ENCODE measurements at regions of chr14 and their contacts with region 1.

Region 1: DNA sequence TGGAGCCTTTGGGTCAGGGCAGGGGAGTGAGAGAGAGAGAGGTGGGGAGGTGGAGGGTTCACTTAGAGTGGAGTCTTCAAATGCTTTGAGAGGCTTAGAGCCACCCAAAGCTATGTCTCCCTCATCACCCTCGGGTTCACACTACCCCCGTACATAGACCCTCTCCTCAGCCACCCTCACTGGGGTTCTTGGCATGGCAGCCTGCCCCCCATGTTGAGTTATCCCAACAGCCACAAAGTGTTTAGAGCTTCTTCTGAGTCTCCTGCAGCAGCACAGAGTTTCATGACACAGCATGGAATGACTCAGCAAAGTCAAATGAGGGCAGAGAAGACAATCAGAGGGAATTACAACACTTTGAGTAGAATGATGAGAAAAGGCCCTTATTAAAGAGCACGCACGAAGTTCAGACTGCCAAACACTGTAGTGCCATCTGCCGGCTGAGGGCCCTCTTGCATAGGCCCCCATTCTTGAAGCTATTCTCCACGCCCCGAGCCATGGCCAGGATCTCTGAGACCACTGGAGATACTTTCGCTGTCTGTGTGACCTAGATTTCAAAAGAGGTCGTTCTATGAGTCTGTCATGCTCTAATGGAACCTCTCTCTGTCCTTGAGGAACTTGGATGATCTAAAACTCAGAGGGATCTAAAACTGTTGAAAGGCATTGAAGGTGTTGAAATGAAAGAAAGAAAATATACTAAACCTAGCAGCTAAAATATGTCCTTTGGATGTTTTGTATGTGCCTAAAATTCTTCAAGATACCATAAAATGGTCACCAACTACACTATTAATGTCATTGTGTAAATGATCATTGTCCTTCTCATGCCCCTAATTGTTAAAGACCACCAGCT is 221.9 kb downstream of the PELI2 start:
- DNase-seq: no peak
- H3K4me3 ChIP-seq: no peak overlapping the region
- H3K27ac ChIP-seq: peak overlapping the region in 1 of 4 donors; percentile 1
- H3K4me1 ChIP-seq: peaks cover 22 to 31% (median 31%) of the 10 kb centered on the region in 4 donors
- H3K27me3 ChIP-seq: no peaks in the 10 kb centered on the region
- CTCF ChIP-seq: peak; percentile 69 to 86 (median 76)
- EP300 ChIP-seq: no peak
- POLR2A ChIP-seq: no peak

Region 2: DNA sequence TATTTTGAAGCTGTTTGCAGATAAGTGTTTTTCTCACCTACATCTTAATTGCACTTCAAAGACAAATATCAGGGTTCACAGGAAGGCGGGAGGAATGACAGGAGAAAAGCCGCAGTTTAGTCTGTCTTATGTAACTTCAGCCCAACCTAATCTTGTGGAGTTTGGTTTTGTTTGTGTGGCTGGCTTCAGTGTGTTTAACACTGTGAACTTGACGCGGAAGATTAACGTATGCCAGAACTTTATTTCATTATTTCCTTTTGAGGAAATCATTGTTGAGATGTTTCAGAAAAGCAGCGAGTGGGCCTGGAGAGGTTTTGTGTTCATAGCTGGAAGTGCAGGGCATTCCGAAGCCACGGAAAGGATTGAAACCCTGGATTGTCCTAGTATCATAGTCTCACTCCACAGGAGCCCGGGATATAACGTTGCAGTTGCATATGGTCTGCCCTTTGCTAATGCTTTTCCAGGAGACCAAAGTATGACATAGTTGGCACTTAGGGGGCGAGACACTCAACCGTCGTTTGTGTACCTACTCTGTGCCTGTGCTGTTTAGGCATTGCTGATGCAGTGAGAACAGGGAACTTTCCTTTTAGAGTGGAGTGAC is 219.9 kb before region 1 on chr14:
- intact Hi-C with region 1: loop called (anchors 10 kb)
- DNase-seq: no peak
- H3K4me3 ChIP-seq: peak overlapping the region; percentile 93 to 98 (median 95)
- H3K27ac ChIP-seq: peak overlapping the region; percentile 87 to 95 (median 90)
- H3K4me1 ChIP-seq: peaks cover 18 to 48% (median 35%) of the 10 kb centered on the region in 4 donors
- H3K27me3 ChIP-seq: no peaks in the 10 kb centered on the region
- CTCF ChIP-seq: peak in 1 of 3 experiments; percentile 23
- EP300 ChIP-seq: no peak
- POLR2A ChIP-seq: no peak

Measured in esophagus muscularis mucosa (tissue), 4 donors.